ENCODE measurements at regions of chr6 and their contacts with region 1.

Region 1: DNA sequence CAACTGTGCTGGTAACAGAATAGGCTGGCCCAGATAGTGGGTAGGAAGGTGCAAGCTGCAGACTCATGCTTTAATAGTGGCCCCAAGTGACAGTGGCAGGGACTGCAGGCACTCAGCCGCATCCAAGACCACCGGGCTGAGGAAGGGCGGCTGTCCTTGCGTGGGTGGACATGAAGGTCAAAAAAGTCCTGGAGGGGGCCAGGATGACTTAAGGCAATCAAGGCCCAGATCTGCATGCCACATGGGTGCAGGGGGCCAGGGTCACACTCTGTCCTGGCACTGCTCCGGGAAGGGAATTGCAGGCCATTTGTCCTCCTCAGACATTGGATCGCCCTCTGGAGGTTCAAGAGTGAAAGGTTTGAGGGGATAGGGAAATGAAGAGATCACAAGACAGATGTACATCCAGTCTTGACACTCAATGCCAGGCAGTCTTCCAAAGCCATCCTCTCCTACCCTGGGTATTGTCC is 10.4 kb upstream of the VNN2 start:
- DNase-seq: peak; percentile 31 to 82
- H3K4me3 ChIP-seq: peak overlapping the region; percentile 16 to 54 (median 42); a peak in 7 of 8 replicates
- H3K27ac ChIP-seq: no peak overlapping the region
- H3K4me1 ChIP-seq: no peaks in the 10 kb centered on the region
- H3K27me3 ChIP-seq: no peaks in the 10 kb centered on the region
- CTCF ChIP-seq: peak; percentile 74 to 83 (median 79); a peak in 3 of 4 replicates
- EP300 ChIP-seq: no peak
- POLR2A ChIP-seq: no peak
- RAD21 ChIP-seq: peak; percentile 75 to 82

Region 2: GRCh38 chr6:132530293-132530974 is 237.7 kb before region 1 on chr6:
- CTCF ChIA-PET with region 1: interaction called, 15 read pairs
- POLR2A ChIA-PET with region 1: no interaction called
- DNase-seq: peak in 1 of 2 experiments; percentile 77
- H3K4me3 ChIP-seq: peak overlapping the region in 1 of 4 experiments; percentile 38; a peak in 1 of 8 replicates
- H3K27ac ChIP-seq: no peak overlapping the region
- H3K4me1 ChIP-seq: peaks cover 0 to 2% (median 0%) of the 10 kb centered on the region in 4 experiments; a peak in 2 of 7 replicates
- H3K27me3 ChIP-seq: no peaks in the 10 kb centered on the region
- CTCF ChIP-seq: peak in 2 of 3 experiments; percentile 64 to 71; a peak in 3 of 4 replicates
- EP300 ChIP-seq: no peak
- POLR2A ChIP-seq: no peak
- RAD21 ChIP-seq: peak; percentile 85

Region 3: DNA sequence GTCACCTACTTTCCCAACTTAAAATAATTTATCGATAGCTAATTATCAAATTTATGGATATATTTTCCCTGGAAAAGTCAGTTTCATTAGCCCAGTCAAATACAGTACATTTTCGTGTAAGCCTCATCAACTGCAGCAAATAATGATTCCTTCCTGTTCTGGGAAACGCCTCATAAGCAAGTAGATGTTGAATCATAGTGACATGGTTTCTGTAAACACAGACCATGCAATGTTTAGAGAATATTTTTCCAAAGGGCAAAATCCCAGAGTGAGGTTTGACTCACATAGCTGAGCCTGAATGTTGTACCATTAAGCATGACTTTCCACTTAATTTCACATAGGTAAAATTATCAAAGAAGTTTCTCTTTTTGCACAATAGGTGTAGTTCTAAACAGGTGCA is 37.5 kb before region 1 on chr6:
- CTCF ChIA-PET with region 1: interaction called, 28 read pairs
- POLR2A ChIA-PET with region 1: no interaction called
- DNase-seq: no peak
- H3K4me3 ChIP-seq: no peak overlapping the region
- H3K27ac ChIP-seq: no peak overlapping the region
- H3K4me1 ChIP-seq: no peaks in the 10 kb centered on the region
- H3K27me3 ChIP-seq: no peaks in the 10 kb centered on the region
- CTCF ChIP-seq: no peak
- EP300 ChIP-seq: no peak
- POLR2A ChIP-seq: no peak
- RAD21 ChIP-seq: no peak

Region 4: DNA sequence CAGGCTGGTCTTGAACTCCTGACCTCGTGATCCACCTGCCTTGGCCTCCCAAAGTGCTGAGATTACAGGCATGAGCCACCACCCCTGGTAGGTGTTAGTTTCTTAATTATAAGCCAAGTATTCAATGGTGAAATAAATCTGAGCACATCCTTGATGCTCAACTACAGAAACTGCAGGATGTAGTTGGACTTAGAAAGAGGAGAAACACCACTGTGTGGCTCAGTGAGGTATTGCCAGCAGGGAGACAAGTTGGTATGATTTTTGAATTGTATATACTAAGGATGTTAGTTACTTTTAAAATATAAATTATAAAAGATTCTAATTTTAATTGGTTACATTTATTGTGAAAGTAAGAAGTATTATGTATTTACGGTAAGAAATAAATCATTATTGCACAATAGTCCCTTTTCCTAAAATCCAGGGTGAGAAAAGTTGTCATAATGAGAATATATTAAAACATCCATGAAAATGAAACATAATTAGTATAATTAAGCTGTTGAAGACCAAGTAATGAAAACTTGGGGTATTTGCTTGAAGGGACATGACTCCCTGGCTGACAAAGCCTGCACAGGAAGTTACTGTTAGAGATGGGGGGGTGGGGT is 12.8 kb after region 1 on chr6:
- CTCF ChIA-PET with region 1: interaction called, 15 read pairs
- POLR2A ChIA-PET with region 1: no interaction called
- DNase-seq: no peak
- H3K4me3 ChIP-seq: no peak overlapping the region
- H3K27ac ChIP-seq: no peak overlapping the region
- H3K4me1 ChIP-seq: no peaks in the 10 kb centered on the region
- H3K27me3 ChIP-seq: no peaks in the 10 kb centered on the region
- CTCF ChIP-seq: peak in 1 of 3 experiments; percentile 20; a peak in 1 of 4 replicates
- EP300 ChIP-seq: no peak
- POLR2A ChIP-seq: no peak
- RAD21 ChIP-seq: peak in 1 of 2 experiments; percentile 22; a peak in 1 of 4 replicates

Region 5: DNA sequence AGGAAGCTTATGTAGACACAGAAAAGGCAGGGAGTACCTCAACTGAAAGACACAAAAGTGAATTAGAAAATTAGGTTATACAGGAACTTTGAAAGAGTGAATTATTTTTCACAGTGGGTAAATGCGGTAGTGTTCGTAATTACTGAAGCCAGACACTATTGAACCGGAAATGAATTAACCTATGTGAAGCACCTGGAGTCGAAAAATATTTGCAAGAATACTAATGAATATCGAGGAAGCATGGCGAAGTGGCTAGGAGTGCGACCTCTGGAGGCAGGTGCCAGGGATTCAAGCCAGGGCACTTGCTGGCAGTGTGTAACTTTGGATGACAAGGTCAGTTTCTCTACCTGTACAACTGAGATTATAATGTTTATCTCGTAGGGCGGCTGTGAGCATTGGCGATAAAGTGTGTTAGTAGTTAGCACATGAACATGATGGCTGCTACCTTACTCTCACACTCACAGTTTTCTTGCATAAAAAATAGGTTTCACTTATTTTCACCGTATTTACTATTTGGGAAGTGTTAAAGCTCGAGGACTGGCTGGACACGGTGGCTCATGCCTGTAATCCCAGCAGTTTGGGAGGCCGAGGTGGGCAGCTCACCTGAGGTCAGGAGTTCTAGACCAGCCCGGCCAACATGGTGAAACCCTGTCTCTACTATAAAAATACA is 30.9 kb after region 1 on chr6:
- CTCF ChIA-PET with region 1: interaction called, 11 read pairs
- POLR2A ChIA-PET with region 1: interaction called, 4 read pairs
- DNase-seq: peak in 1 of 2 experiments; percentile 76
- H3K4me3 ChIP-seq: peak overlapping the region; percentile 57 to 94 (median 74)
- H3K27ac ChIP-seq: no peak overlapping the region
- H3K4me1 ChIP-seq: peaks cover 0 to 3% (median 0%) of the 10 kb centered on the region in 4 experiments; a peak in 1 of 7 replicates
- H3K27me3 ChIP-seq: no peaks in the 10 kb centered on the region
- CTCF ChIP-seq: peak; percentile 55 to 93 (median 90)
- EP300 ChIP-seq: no peak
- POLR2A ChIP-seq: no peak
- RAD21 ChIP-seq: peak in 1 of 2 experiments; percentile 20; a peak in 2 of 4 replicates

Measured in H1 (cell line).